ENCODE measurements at regions of chr19 and their contacts with region 1.

Region 1: DNA sequence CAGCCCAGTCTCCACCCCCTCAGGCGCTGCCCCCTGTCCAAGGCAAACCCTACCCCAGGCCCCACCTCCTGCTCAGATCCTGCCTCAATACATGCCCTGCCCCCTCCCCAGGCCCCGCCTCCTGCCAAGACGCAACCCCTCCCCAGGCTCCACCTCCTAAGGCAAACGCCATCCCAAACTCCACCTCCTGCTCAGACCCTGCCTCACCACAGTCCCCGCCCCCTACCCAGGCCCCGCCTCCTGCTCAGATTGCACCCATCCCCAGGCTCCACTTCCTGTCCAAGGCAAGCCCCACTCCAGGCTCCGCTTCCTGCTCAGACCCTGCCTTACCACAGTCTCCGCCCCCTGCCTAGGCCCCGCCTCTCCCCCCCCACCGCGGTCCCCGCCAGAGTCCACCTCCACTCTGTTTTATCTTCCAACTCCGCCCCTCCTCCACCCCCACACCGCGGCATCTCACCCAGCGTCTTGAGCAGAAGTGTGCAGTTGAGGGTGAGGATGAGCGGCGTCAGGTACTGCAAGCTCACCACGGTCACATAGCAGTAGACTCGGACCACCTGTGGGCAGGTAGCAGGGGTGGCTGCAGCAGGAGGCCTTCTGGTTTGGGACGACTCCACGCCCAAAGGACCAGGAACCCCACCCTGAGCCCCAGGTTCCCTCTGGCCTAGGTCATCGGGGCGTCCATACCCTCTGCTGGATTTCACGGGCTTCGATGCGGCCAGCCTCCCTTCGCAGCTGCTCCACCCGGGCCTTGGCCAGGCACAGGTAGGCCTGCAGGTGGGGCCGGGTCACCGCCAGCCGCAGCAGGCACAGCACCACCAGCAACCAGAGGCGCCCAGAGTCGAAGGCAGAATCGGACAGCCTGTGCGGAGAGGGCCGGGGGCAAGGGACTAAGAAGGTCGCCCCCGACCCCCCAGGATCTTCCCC is 17.7 kb downstream of the TMEM161A start:
- DNase-seq: no peak
- H3K4me3 Mint-ChIP-seq: no peak overlapping the region
- H3K27ac Mint-ChIP-seq: no peak overlapping the region
- H3K4me1 Mint-ChIP-seq: no peaks in the 10 kb centered on the region
- H3K27me3 Mint-ChIP-seq: no peaks in the 10 kb centered on the region
- CTCF ChIP-seq: no peak

Region 2: GRCh38 chr19:19068659-19069654 is 51.6 kb before region 1 on chr19:
- CTCF ChIA-PET with region 1: no interaction called
- intact Hi-C with region 1: no loop called
- DNase-seq: no peak
- H3K4me3 Mint-ChIP-seq: no peak overlapping the region
- H3K27ac Mint-ChIP-seq: no peak overlapping the region
- H3K4me1 Mint-ChIP-seq: no peaks in the 10 kb centered on the region
- H3K27me3 Mint-ChIP-seq: no peaks in the 10 kb centered on the region
- CTCF ChIP-seq: no peak

Region 3: GRCh38 chr19:19081642-19082151 is 38.9 kb before region 1 on chr19:
- CTCF ChIA-PET with region 1: interaction called, 15 read pairs
- intact Hi-C with region 1: no loop called
- DNase-seq: no peak
- H3K4me3 Mint-ChIP-seq: no peak overlapping the region
- H3K27ac Mint-ChIP-seq: no peak overlapping the region
- H3K4me1 Mint-ChIP-seq: no peaks in the 10 kb centered on the region
- H3K27me3 Mint-ChIP-seq: no peaks in the 10 kb centered on the region
- CTCF ChIP-seq: no peak

Measured in Calu3 (cell line).